Activated CD4-positive, alpha-beta T cell treated with anti-CD3 and anti-CD28 coated beads for 36 hours (primary cell): ENCODE measurements at regions of chr13 and their contacts with region 1.

Region 1: GRCh38 chr13:73390100-73390499 is 331.3 kb downstream of the KLF5 start:
- DNase-seq: no peak
- ATAC-seq: no peak
- H3K4me3 Mint-ChIP-seq: no peak overlapping the region
- H3K27ac Mint-ChIP-seq: no peak overlapping the region
- H3K4me1 Mint-ChIP-seq: no peaks in the 10 kb centered on the region
- H3K27me3 Mint-ChIP-seq: peaks cover 6% of the 10 kb centered on the region

Region 2: GRCh38 chr13:72983085-72983768 is 406.9 kb before region 1 on chr13:
- CTCF ChIA-PET with region 1: no interaction called
- POLR2A ChIA-PET with region 1: interaction called, 11 read pairs
- intact Hi-C with region 1: no loop called
- DNase-seq: no peak
- ATAC-seq: no peak
- H3K4me3 Mint-ChIP-seq: no peak overlapping the region
- H3K27ac Mint-ChIP-seq: no peak overlapping the region
- H3K4me1 Mint-ChIP-seq: no peaks in the 10 kb centered on the region
- H3K27me3 Mint-ChIP-seq: no peaks in the 10 kb centered on the region

Region 3: GRCh38 chr13:73138643-73139491 is 251.2 kb before region 1 on chr13:
- CTCF ChIA-PET with region 1: no interaction called
- POLR2A ChIA-PET with region 1: no interaction called
- intact Hi-C with region 1: no loop called
- DNase-seq: no peak
- ATAC-seq: no peak
- H3K4me3 Mint-ChIP-seq: no peak overlapping the region
- H3K27ac Mint-ChIP-seq: no peak overlapping the region
- H3K4me1 Mint-ChIP-seq: no peaks in the 10 kb centered on the region
- H3K27me3 Mint-ChIP-seq: no peaks in the 10 kb centered on the region